ENCODE measurements at regions of chr7 and their contacts with region 1.

Region 1: GRCh38 chr7:78684201-78684600 is 769.3 kb downstream of the MAGI2 start:
- DNase-seq: no peak
- ATAC-seq: no peak
- H3K4me3 ChIP-seq: no peak overlapping the region
- H3K4me1 ChIP-seq: no peaks in the 10 kb centered on the region
- CTCF ChIP-seq: no peak

Region 2: DNA sequence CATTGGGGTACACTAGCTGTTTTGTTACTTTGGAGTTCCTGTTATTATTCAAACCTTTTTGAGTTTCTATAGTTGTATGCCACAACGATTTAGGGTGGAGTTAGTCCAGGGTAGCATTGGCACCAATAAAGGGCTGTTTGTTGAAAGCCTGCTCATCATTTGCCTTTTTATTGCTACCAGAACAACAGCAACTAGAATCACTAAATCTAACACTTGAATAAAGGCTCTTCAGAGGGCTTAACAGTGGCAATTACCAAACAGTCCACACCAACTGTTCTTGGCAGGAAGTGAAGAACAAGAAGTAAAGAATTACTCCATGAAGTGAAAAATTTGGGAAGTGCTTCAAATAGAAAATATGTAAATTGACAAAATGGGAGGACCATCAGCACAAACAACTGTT is 264.2 kb before region 1 on chr7:
- intact Hi-C with region 1: no loop called
- DNase-seq: no peak
- ATAC-seq: no peak
- H3K4me3 ChIP-seq: no peak overlapping the region
- H3K4me1 ChIP-seq: no peaks in the 10 kb centered on the region
- CTCF ChIP-seq: no peak

Region 3: DNA sequence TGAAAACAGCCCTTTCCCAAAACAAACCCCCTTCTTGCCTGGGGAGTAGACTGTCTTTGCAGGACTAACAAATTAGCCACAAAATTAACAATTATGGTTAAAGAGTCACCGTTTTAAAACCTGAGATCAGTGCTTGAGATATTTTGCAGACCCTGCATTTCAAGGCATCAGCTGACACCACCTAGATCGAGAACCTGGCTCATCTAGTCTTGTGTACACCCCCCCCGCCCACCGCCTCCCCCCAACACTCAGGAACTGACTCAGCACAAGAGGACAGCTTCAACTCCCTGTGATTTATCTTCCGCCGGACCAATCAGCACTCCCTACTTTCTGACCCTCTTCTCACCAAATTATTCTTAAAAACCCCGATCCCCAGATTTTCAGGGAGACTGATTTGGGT is 148.5 kb before region 1 on chr7:
- intact Hi-C with region 1: loop called in 1 of 2 experiments (anchors 5 kb)
- DNase-seq: no peak
- ATAC-seq: no peak
- H3K4me3 ChIP-seq: no peak overlapping the region
- H3K4me1 ChIP-seq: no peaks in the 10 kb centered on the region
- CTCF ChIP-seq: no peak